ENCODE measurements at regions of chr22 and their contacts with region 1.

Region 1: GRCh38 chr22:25777870-25778269 is 35.9 kb downstream of the MYO18B start:
- DNase-seq: peak in 1 of 4 donors; percentile 25
- ATAC-seq: no peak
- H3K4me3 ChIP-seq: no peak overlapping the region
- H3K27ac ChIP-seq: no peak overlapping the region
- H3K4me1 ChIP-seq: no peaks in the 10 kb centered on the region
- H3K27me3 ChIP-seq: no peaks in the 10 kb centered on the region
- CTCF ChIP-seq: peak in 3 of 7 experiments; percentile 15 to 19 (median 17)
- POLR2A ChIP-seq: no peak

Region 2: DNA sequence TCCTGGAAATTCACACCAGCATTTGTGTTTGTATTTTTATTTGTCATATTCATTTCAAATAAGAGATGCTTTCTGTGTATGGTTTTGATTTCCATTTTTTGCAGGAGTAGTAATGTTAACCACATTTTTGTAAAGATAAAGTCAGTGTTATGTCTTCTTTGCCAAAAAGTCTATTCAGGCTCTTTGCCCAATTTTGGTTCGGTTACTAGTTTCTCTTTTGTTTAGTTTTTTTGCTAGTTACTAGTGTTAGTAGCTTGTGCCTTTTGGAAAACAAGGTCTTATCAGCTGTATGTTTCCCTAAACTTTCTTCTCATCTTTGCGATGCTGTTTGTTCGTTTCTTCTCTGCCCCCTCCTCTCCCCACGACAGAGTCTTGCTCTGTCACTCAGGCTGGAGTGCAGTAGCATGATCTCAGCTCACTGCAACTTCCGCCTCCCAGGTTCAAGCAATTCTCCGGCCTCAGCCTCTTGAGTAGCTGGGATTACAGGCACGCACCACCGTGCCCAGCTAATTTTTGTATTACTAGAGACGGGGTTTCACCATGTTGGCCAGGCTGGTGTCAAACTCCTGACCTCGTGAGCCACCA is 325.7 kb before region 1 on chr22:
- intact Hi-C with region 1: loop called (anchors 5 kb)
- DNase-seq: no peak
- ATAC-seq: no peak
- H3K4me3 ChIP-seq: no peak overlapping the region
- H3K27ac ChIP-seq: no peak overlapping the region
- H3K4me1 ChIP-seq: peaks cover 37% of the 10 kb centered on the region
- H3K27me3 ChIP-seq: no peaks in the 10 kb centered on the region
- CTCF ChIP-seq: no peak
- POLR2A ChIP-seq: no peak

Region 3: DNA sequence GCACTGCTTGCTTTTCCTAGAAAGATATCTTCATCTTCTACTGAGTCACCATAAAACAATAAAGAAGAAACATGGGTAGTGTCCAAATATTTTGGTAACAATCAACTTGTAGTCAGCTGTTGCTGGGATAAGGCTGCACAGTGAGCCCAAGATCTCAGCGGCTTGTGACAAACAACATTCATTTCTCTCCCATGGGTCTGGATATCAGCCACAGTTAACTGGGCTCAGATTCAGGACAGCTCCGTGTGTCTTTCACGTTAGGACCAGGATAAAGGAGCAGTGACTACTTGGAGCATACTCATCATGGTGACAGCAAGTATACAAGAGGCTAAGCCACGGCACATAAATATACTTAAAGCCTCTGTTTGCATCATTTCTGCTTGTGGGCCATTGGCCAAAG is 241.3 kb before region 1 on chr22:
- intact Hi-C with region 1: loop called (anchors 10 kb)
- DNase-seq: no peak
- ATAC-seq: no peak
- H3K4me3 ChIP-seq: no peak overlapping the region
- H3K27ac ChIP-seq: no peak overlapping the region
- H3K4me1 ChIP-seq: no peaks in the 10 kb centered on the region
- H3K27me3 ChIP-seq: no peaks in the 10 kb centered on the region
- CTCF ChIP-seq: no peak
- POLR2A ChIP-seq: no peak